Naive thymus-derived CD4-positive, alpha-beta T cell (primary cell): ENCODE measurements at regions of chr3 and their contacts with region 1.

Region 1: DNA sequence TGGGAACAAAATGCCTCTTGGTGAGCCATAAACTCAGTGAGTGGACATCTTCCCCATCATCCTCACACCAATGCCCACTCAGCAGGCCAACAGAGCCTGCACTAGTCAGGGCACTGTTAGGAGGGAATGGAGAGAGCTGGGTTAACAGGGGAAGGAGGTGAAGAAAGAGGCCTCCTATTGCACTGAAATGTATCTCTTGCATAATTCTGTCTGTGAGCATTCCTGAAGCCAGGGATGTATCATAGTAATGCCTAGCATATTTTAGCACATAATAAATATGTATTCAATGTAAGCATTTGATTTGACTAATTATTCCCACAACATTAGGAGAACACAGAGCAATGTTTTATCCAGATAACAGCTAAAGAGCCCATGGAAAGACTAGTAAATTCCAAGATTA is 81.2 kb downstream of the ANO10 start:
- DNase-seq: no peak
- ATAC-seq: no peak
- H3K4me3 ChIP-seq: no peak overlapping the region
- H3K4me3 Mint-ChIP-seq: no peak overlapping the region
- H3K27ac ChIP-seq: no peak overlapping the region
- H3K27ac Mint-ChIP-seq: no peak overlapping the region
- H3K4me1 ChIP-seq: no peaks in the 10 kb centered on the region
- H3K4me1 Mint-ChIP-seq: no peaks in the 10 kb centered on the region
- H3K27me3 ChIP-seq: no peaks in the 10 kb centered on the region
- H3K27me3 Mint-ChIP-seq: no peaks in the 10 kb centered on the region

Region 2: DNA sequence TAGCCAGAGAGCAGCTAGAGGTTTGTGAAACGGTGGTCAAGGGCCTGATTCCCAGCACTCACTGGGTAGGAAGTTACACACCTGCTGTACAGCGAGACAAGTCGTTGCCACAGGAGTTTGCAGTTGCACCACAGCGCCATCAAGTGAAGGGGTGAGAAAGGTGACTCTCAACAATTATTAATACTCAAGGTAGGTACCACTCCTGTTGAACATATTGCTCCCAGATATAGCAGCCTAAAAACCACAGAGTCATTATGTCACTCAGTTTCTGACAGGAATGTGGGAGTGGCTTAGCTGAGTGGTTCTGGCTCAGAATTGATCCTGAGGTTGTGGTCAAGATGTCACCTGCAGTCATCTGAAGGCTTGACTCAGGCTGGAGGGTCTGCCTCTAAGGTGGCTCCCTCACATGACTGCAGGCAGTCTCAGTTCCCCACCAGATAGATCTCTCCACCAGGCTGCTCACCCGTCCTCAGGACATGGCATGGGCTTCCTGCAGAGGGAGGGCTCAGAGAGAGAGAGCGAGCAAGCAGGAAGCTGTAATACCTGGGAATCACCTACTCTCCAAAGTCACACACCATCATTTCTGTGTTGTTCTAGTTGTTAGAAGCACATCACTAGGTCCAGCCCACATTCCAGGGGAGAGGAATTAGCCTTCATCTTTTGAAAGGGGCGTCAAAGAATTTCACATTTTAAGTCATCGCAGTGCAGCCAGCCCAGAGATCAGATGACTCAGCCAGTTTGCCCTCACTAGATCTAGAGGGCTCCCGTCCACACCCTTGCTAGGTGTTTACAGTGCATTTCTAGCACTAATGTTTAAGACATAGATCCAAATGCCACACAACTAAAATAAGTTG is 98.2 kb after region 1 on chr3:
- CTCF ChIA-PET with region 1: no interaction called
- POLR2A ChIA-PET with region 1: no interaction called
- intact Hi-C with region 1: loop called (anchors 1 kb)
- DNase-seq: peak in 3 of 9 donors; percentile 7 to 12 (median 8)
- ATAC-seq: peak; percentile 45
- H3K4me3 ChIP-seq: no peak overlapping the region
- H3K4me3 Mint-ChIP-seq: no peak overlapping the region
- H3K27ac ChIP-seq: no peak overlapping the region
- H3K27ac Mint-ChIP-seq: no peak overlapping the region
- H3K4me1 ChIP-seq: no peaks in the 10 kb centered on the region
- H3K4me1 Mint-ChIP-seq: peaks cover 0 to 8% (median 0%) of the 10 kb centered on the region in 7 donors
- H3K27me3 ChIP-seq: no peaks in the 10 kb centered on the region
- H3K27me3 Mint-ChIP-seq: peaks cover 5 to 10% (median 7%) of the 10 kb centered on the region in 5 donors

Region 3: GRCh38 chr3:43649365-43649968 is 108.8 kb after region 1 on chr3:
- CTCF ChIA-PET with region 1: no interaction called
- POLR2A ChIA-PET with region 1: no interaction called
- intact Hi-C with region 1: no loop called
- DNase-seq: no peak
- ATAC-seq: no peak
- H3K4me3 ChIP-seq: no peak overlapping the region
- H3K4me3 Mint-ChIP-seq: peak overlapping the region in 1 of 10 donors; percentile 36
- H3K27ac ChIP-seq: no peak overlapping the region
- H3K27ac Mint-ChIP-seq: no peak overlapping the region
- H3K4me1 ChIP-seq: no peaks in the 10 kb centered on the region
- H3K4me1 Mint-ChIP-seq: peaks cover 0 to 4% (median 0%) of the 10 kb centered on the region in 7 donors
- H3K27me3 ChIP-seq: no peaks in the 10 kb centered on the region
- H3K27me3 Mint-ChIP-seq: peaks cover 11 to 16% (median 13%) of the 10 kb centered on the region in 5 donors

Region 4: GRCh38 chr3:43742920-43743319 is 202.3 kb after region 1 on chr3:
- CTCF ChIA-PET with region 1: no interaction called
- POLR2A ChIA-PET with region 1: no interaction called
- intact Hi-C with region 1: loop called in 1 of 2 experiments (anchors 1 kb)
- DNase-seq: no peak
- ATAC-seq: no peak
- H3K4me3 ChIP-seq: no peak overlapping the region
- H3K4me3 Mint-ChIP-seq: no peak overlapping the region
- H3K27ac ChIP-seq: no peak overlapping the region
- H3K27ac Mint-ChIP-seq: no peak overlapping the region
- H3K4me1 ChIP-seq: no peaks in the 10 kb centered on the region
- H3K4me1 Mint-ChIP-seq: no peaks in the 10 kb centered on the region
- H3K27me3 ChIP-seq: no peaks in the 10 kb centered on the region
- H3K27me3 Mint-ChIP-seq: peaks cover 0 to 6% (median 0%) of the 10 kb centered on the region in 5 donors

Region 5: GRCh38 chr3:44077246-44077645 is 536.6 kb after region 1 on chr3:
- CTCF ChIA-PET with region 1: no interaction called
- POLR2A ChIA-PET with region 1: no interaction called
- intact Hi-C with region 1: loop called in 1 of 2 experiments (anchors 1 kb)
- DNase-seq: no peak
- ATAC-seq: no peak
- H3K4me3 ChIP-seq: no peak overlapping the region
- H3K4me3 Mint-ChIP-seq: no peak overlapping the region
- H3K27ac ChIP-seq: no peak overlapping the region
- H3K27ac Mint-ChIP-seq: no peak overlapping the region
- H3K4me1 ChIP-seq: no peaks in the 10 kb centered on the region
- H3K4me1 Mint-ChIP-seq: no peaks in the 10 kb centered on the region
- H3K27me3 ChIP-seq: no peaks in the 10 kb centered on the region
- H3K27me3 Mint-ChIP-seq: peaks cover 0 to 10% (median 0%) of the 10 kb centered on the region in 5 donors

Region 6: DNA sequence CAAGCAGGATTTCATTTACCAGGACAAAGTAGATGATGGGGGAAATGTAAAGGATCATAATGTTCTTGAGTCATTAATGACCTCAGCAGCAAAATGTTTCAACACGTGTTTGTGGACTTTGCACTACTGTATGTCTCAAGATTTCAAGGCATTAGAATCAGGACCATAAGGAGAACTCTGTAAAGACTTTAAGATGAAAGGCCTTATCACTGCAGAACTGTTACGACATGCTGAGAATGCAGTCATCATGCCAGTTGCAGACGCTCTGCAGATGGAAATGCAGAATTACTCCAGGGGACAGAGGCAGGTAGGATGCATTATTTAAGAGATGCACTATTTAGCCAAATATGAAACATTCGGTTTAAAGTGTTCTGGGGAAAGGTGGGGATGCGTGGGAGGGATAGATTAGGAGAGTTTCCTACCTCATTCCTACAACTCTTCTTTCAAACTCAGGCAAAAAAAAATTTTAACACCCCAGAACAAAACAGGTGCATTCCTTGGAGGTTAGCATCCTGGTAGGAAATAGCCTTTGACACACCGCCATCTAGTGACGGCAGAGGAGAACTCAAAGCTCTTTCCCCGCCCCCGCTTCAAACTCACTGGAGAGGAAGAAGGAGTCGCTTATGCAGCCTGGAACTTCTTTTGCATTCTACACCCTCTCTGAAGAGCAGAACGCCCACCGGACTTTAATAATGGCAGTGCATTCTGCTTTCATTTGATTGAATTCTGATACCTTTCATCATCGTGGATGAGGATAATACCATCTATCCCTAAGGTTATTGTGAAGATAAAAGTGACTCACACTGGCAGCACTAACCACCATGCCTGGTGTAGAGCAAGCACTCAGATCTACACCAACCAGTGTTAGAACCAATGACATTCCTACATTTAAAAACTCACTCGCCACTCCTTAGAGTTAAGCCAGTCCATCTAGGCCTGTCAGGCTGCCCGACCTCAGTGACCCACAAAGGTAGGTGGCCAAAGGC is 658.0 kb after region 1 on chr3:
- CTCF ChIA-PET with region 1: interaction called, 4 read pairs
- POLR2A ChIA-PET with region 1: no interaction called
- intact Hi-C with region 1: loop called (anchors 1 kb)
- DNase-seq: peak; percentile 23 to 68 (median 62)
- ATAC-seq: peak; percentile 83
- H3K4me3 ChIP-seq: no peak overlapping the region
- H3K4me3 Mint-ChIP-seq: no peak overlapping the region
- H3K27ac ChIP-seq: no peak overlapping the region
- H3K27ac Mint-ChIP-seq: no peak overlapping the region
- H3K4me1 ChIP-seq: no peaks in the 10 kb centered on the region
- H3K4me1 Mint-ChIP-seq: no peaks in the 10 kb centered on the region
- H3K27me3 ChIP-seq: no peaks in the 10 kb centered on the region
- H3K27me3 Mint-ChIP-seq: peaks cover 16 to 25% (median 18%) of the 10 kb centered on the region in 5 donors

Region 7: DNA sequence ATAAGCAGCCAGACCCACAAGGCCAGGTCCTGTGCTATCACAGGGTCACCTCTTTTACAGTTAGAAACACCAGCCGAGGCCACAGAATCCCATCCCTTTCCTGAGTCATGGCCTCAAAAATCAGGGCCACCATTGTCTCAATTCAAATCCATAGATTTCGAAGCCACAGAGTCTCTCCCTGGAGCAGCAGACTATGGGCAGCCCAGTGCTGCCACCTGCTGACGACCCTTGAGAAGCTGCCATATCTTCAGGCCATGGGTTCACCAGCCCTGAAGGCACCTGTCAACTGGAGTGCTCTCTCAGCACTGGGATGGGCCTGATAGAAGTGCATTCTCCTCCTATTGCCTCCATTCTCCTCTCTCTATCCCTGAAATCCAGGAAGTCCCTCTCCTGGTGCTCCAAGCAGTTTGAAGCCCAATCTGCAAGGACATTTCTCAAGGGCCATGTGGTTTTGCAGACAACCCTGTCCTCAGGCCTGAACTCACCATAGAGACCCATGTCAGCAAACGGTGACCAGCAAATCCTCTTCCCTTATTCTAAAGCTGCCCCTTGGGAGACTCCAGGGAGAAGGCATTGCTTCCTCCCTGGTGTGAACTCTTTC is 1373.3 kb after region 1 on chr3:
- CTCF ChIA-PET with region 1: no interaction called
- POLR2A ChIA-PET with region 1: no interaction called
- intact Hi-C with region 1: loop called in 1 of 2 experiments (anchors 5 kb)
- DNase-seq: peak; percentile 27 to 69 (median 53)
- ATAC-seq: peak; percentile 70
- H3K4me3 ChIP-seq: no peak overlapping the region
- H3K4me3 Mint-ChIP-seq: no peak overlapping the region
- H3K27ac ChIP-seq: no peak overlapping the region
- H3K27ac Mint-ChIP-seq: no peak overlapping the region
- H3K4me1 ChIP-seq: no peaks in the 10 kb centered on the region
- H3K4me1 Mint-ChIP-seq: peaks cover 0 to 4% (median 0%) of the 10 kb centered on the region in 7 donors
- H3K27me3 ChIP-seq: no peaks in the 10 kb centered on the region
- H3K27me3 Mint-ChIP-seq: peaks cover 13 to 19% (median 14%) of the 10 kb centered on the region in 5 donors